ENCODE measurements at regions of chr22 and their contacts with region 1.

Region 1: DNA sequence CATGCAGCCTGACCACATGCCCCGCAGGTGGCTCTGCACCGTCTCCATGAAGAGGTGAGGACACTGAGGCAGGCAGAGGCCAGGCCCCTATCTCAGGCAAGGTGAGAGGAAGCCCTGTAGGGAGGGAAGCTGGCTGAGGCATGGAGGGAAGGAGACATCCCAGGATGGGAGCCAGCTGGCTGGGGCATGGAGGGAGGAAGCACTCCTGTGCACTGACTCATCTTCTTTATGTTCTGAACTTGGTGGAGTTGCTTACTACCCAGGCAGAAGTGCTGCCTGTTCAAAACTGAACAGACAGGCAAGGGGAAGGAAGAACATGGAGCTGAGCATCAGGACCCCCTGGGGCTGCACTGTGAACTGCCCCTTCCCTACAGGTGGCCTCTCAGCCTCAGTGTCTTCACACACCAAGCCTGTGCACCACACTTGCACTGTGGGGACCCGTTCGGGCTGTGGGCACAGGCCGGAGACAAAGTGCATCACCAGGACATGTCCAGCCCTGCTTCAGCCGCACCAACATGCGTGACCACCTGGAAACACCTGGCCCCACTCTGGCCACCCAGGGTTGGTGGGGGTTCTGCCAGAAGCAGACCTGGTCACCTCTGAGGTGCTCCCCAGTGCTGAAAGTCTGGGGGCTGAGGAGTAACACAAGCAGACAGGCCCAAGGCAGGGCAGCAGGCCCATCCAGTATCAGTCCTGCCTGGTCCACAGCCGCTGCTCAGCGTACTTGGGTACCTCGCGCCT is 55.5 kb downstream of the DGCR2 start:
- DNase-seq: no peak
- ATAC-seq: peak in 1 of 4 donors; percentile 23
- H3K4me3 ChIP-seq: no peak overlapping the region
- H3K27ac ChIP-seq: no peak overlapping the region
- H3K4me1 ChIP-seq: peaks cover 0 to 20% (median 4%) of the 10 kb centered on the region in 12 donors
- H3K27me3 ChIP-seq: no peaks in the 10 kb centered on the region
- CTCF ChIP-seq: no peak
- POLR2A ChIP-seq: no peak

Region 2: DNA sequence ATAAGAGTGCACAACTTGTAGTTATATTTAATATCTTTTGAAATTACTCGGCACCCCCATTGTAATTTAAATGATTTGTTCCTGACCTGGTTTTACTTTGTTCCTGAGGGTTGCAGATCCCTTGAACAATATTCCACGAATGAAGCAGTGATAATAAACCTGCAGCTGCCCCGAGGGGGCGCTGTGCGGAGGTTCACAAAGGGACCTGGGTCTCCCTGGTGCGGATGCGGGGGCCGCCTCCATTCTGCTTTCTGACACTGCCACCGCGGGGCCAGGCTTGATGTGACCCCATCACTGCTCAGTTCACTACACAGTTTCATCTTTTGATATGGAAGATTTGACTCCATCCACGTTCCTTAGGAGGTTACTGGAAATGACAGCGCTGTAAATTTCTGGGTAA is 67.7 kb before region 1 on chr22:
- intact Hi-C with region 1: loop called in 1 of 10 experiments (anchors 10 kb)
- DNase-seq: no peak
- ATAC-seq: no peak
- H3K4me3 ChIP-seq: no peak overlapping the region
- H3K27ac ChIP-seq: no peak overlapping the region
- H3K4me1 ChIP-seq: no peaks in the 10 kb centered on the region
- H3K27me3 ChIP-seq: peaks cover 0 to 59% (median 12%) of the 10 kb centered on the region in 9 donors
- CTCF ChIP-seq: peak in 4 of 12 donors; percentile 6 to 22 (median 12)
- POLR2A ChIP-seq: no peak

Region 3: DNA sequence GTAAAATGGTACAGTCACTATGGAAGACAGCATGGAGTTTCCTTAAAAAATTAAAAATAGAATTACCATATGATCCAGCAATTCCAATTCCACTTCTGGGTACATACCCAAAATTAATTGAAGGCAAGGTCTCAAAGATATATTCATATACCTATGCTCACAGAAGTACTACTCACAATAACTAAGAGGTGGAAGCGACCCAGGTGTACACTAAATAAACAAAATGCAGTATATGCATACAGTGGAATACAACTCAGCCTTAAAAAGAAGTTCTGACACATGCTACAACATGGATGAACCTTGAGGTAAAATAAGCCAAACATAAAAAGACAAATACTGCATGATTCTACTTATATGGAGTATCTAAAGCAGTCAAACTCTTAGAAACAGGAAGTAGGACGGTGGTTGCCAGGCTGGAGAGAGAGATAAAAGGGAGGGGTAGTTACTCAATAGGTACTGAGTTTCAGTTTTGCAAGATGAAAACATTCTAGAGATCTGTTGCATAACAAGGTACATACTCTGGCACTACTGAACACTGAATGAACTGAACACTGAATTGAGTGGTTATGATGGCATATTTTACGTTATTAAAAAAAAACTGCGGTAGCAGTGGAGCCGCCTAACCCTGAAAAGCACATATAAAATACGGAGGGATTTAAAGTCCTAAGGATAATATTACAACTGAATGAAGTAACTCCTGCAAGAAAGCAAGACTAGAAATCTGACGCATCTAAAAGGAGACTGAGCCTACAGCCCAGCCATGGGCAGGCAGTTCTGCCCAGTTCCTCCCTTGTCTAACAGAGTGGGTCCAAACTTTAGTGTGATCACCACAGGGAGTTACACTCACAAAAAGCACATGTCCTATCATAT is 42.7 kb after region 1 on chr22:
- intact Hi-C with region 1: no loop called
- DNase-seq: no peak
- ATAC-seq: peak; percentile 8 to 75 (median 66)
- H3K4me3 ChIP-seq: peak overlapping the region in 1 of 12 donors; percentile 40
- H3K27ac ChIP-seq: peak overlapping the region in 1 of 12 donors; percentile 86
- H3K4me1 ChIP-seq: peaks cover 10 to 68% (median 46%) of the 10 kb centered on the region in 12 donors
- H3K27me3 ChIP-seq: no peaks in the 10 kb centered on the region
- CTCF ChIP-seq: no peak
- POLR2A ChIP-seq: no peak

Region 4: DNA sequence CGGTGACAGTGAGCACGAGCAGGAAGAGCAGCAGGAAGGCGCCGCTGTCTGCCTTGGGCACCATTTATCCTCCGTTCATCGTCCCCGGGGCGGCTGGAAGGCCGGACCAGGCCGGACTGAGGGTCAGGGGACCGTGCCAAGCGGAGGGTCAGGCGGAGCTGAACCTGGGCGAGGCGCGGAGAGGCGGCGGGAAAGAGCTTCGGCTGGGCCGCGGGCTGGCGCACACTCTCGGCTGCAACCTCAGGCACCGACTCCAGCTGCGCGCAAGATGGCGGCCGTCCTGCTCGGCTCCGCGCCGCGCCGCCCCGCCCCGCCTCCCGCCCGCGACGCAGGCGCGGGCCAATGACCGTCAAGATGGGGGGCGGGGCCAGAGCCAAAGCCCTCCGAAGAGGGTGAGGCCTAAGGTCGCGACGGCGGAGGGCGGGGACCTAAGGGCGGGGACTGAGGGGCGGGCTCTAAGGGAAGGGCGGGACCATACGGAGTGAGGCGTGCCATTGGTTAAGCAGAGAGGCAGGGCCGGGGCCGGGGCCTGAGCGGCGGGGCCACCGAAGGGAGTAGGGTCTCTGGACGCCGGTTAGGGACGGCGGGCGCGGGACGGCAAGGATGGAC is 55.5 kb after region 1 on chr22 and contains the start of gene DGCR2:
- intact Hi-C with region 1: loop called in 1 of 10 experiments (anchors 10 kb)
- DNase-seq: peak; percentile 97 to 99 (median 97)
- ATAC-seq: peak; percentile 97 to 99 (median 98)
- H3K4me3 ChIP-seq: peak within 1 kb of the TSS; percentile 86 to 98 (median 94)
- H3K27ac ChIP-seq: peak within 1 kb of the TSS; percentile 88 to 98 (median 94)
- H3K4me1 ChIP-seq: peaks cover 4 to 53% (median 44%) of the 10 kb centered on the region in 12 donors
- H3K27me3 ChIP-seq: no peaks in the 10 kb centered on the region
- CTCF ChIP-seq: peak in 2 of 12 donors; percentile 9 to 13
- POLR2A ChIP-seq: peak; percentile 37 to 85
- total RNA-seq, gene DGCR2: 36.1 to 53.3 (median 41.2) TPM

Measured in heart left ventricle (tissue), 16 donors.